PC-9 (cell line): ENCODE measurements at regions of chr16 and their contacts with region 1.

Region 1: DNA sequence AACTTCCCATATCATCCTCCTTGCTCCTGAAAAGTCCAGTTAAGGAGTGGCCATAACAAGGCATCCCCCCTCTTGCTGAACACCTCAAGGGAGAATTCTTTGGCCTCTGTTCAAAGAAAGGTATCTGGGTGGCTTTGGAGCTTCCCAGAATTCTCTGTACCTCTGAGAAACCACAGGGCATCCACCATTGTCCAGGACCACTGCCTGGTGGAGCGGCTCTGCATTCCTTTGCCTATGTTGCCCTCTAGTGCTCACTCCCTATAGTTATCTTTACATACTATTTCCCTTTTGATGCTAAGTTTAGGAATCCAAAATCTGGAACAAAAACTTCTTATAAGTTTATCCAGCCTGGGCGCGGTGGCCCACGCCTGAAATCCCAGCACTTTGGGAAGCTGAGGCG is 30.3 kb downstream of the CHD9NB start:
- DNase-seq: peak in 1 of 2 experiments; percentile 32
- H3K4me3 ChIP-seq: no peak overlapping the region
- H3K27ac ChIP-seq: no peak overlapping the region
- H3K4me1 ChIP-seq: no peaks in the 10 kb centered on the region
- H3K27me3 ChIP-seq: no peaks in the 10 kb centered on the region
- CTCF ChIP-seq: peak; percentile 81

Region 2: GRCh38 chr16:52068447-52069074 is 953.8 kb before region 1 on chr16:
- CTCF ChIA-PET with region 1: no interaction called
- POLR2A ChIA-PET with region 1: no interaction called
- intact Hi-C with region 1: loop called (anchors 5 kb)
- DNase-seq: no peak
- H3K4me3 ChIP-seq: no peak overlapping the region
- H3K27ac ChIP-seq: no peak overlapping the region
- H3K4me1 ChIP-seq: no peaks in the 10 kb centered on the region
- H3K27me3 ChIP-seq: no peaks in the 10 kb centered on the region
- CTCF ChIP-seq: no peak

Region 3: DNA sequence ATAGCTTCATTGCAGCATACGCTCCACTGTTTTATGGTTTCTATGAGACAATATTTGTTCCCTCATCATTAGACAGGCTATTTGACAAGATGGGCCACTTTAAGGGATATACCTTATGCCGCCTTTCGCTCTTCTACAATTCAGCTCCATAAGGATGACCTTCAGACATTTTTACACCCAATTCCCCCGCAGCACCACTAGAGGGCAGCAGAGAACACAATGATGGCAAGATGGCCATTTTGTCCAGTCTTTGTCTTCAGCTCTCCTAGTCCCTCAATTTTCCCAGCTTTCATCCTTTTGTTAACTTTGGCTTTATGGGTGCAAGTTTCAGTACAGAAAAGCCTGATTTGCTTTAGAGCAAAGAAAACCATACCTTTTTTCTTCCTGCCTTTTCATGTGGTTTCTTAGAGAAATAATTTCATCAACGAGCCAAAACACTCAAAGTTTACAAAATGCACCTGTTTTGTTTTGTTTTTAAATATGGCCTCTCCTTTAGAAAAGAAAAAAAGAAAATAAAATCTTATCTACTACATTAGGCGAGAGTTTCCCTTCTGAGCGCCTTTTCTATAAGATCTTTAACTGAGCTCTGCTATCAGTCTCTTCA is 830.7 kb before region 1 on chr16:
- CTCF ChIA-PET with region 1: no interaction called
- POLR2A ChIA-PET with region 1: no interaction called
- intact Hi-C with region 1: loop called (anchors 2 kb)
- DNase-seq: peak in 1 of 2 experiments; percentile 38
- H3K4me3 ChIP-seq: no peak overlapping the region
- H3K27ac ChIP-seq: no peak overlapping the region
- H3K4me1 ChIP-seq: no peaks in the 10 kb centered on the region
- H3K27me3 ChIP-seq: no peaks in the 10 kb centered on the region
- CTCF ChIP-seq: peak; percentile 88

Region 4: DNA sequence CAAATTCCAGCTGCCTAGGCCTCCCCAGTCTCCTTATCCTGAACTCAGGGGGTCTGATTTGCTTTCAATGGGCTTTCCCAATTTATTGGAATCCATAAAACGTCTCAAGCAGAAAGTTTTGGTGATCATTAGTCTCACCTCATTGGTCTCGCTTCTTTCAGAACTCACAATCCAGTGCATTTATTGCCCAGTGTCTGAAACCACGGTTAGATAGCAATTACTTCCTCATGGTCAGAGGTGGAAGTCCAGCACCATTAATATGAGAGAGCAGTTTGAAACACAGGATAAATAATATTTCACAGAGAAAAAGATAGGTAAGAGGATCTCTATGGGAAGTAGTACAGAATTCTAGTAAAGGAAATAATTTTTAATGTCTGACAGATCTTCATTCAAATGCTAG is 604.2 kb before region 1 on chr16:
- CTCF ChIA-PET with region 1: no interaction called
- POLR2A ChIA-PET with region 1: no interaction called
- intact Hi-C with region 1: no loop called
- DNase-seq: no peak
- H3K4me3 ChIP-seq: no peak overlapping the region
- H3K27ac ChIP-seq: no peak overlapping the region
- H3K4me1 ChIP-seq: no peaks in the 10 kb centered on the region
- H3K27me3 ChIP-seq: no peaks in the 10 kb centered on the region
- CTCF ChIP-seq: no peak

Region 5: DNA sequence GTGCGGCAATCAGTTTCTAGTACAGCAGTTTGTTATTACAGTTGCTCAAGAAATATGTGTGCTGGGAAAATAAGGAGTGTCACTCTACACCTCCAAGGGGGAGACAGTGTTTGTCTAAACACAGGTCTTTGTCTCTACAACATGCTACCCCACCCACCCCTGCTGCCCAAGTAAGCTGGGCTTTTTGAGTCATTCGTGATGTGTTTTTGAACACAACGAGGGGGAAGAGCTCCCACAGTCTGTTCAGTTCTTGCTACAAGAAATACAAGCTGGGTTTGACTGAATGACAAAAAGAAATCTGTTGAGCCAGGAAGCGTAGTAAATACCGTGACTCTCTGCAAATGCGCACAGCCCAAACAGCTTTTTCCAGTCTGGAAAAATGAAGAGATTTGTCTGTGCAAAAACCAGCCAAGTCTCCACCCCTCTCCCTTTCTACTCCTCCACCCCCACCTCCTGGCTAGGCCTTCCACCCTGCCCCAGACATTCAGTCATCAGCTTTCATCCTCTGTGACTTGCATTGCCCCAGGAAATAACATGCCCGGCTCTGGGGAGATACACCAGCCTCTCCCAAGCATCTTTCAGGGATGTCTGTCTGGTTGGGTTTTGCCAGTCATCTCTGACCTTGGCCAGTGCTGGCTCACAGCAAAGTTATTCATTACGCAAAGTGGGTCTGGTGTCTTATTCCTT is 58.1 kb after region 1 on chr16:
- CTCF ChIA-PET with region 1: no interaction called
- POLR2A ChIA-PET with region 1: no interaction called
- intact Hi-C with region 1: no loop called
- DNase-seq: peak in 1 of 2 experiments; percentile 61
- H3K4me3 ChIP-seq: no peak overlapping the region
- H3K27ac ChIP-seq: peak overlapping the region; percentile 9; the same call in 1 of the 2 replicates
- H3K4me1 ChIP-seq: 0 out of 2 replicates have a peak, but pooled peaks cover 14% of the 10 kb centered on the region
- H3K27me3 ChIP-seq: no peaks in the 10 kb centered on the region
- CTCF ChIP-seq: no peak

Region 6: GRCh38 chr16:53123747-53124146 is 101.4 kb after region 1 on chr16:
- CTCF ChIA-PET with region 1: no interaction called
- POLR2A ChIA-PET with region 1: no interaction called
- intact Hi-C with region 1: no loop called
- DNase-seq: no peak
- H3K4me3 ChIP-seq: no peak overlapping the region
- H3K27ac ChIP-seq: no peak overlapping the region
- H3K4me1 ChIP-seq: no peaks in the 10 kb centered on the region
- H3K27me3 ChIP-seq: no peaks in the 10 kb centered on the region
- CTCF ChIP-seq: no peak

Region 7: DNA sequence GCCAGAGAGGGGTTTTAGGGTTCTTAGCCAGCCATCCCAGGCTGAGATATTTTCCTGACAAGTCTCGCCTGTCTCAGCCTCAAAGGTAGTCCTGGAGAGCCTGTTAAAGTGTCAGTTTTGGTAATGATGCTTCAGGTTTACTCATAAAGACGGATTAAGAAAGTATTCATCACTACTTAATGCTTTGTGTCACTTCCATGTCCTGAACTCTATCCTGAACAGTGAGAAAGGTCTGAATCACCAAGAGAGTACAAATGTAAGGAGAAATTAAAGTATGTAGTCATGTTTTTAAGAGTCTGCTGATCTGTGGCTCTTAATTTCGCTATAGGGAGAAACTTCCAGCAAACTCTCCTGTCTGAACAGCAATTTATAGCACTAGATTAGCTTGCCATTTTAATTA is 667.3 kb after region 1 on chr16:
- CTCF ChIA-PET with region 1: no interaction called
- POLR2A ChIA-PET with region 1: no interaction called
- intact Hi-C with region 1: no loop called
- DNase-seq: no peak
- H3K4me3 ChIP-seq: no peak overlapping the region
- H3K27ac ChIP-seq: no peak overlapping the region
- H3K4me1 ChIP-seq: no peaks in the 10 kb centered on the region
- H3K27me3 ChIP-seq: no peaks in the 10 kb centered on the region
- CTCF ChIP-seq: no peak